Ovary (tissue), 10 donors: ENCODE measurements at regions of chr10 and their contacts with region 1.

Region 1: DNA sequence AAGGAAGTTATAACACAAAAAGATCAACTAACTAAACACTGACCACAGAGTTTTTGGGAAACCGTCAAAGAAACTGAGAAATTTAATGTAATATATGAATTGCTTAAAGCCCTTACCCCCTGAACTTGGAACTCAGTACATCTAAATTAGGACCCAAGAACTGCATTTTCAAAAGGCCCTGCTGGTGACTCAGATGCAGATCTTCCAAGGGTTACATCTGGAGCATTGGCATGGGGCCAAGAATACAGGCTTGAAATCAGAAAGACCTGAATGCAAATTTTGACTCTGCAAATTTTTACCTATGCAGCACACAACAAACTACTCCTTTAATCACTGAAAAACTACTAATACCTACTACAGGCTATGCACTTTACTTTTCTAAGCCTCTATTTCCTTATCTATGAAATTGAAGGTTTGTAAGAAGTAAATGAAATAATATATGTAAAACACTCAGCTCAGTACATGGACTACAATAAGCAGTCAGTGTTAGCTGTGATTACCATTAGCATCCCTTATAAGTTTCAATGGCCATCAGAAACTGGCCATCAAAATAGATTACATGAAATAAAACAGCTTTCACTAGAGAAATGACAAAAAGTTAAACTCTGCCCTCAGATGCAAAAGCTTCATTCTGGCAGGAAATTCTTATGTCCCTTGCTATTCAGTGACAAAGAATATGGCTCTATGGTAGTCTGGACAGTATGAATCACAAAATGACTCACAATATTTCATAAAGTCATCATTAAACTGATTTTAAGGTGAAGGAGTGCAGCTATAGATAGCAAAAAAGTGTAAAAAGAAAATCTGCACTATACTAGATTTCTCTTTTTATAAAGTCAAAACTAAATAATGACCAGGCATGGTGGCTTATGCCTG is 43.6 kb downstream of the NSUN6 start:
- DNase-seq: peak in 3 of 5 donors; percentile 20 to 37 (median 35)
- H3K4me3 ChIP-seq: no peak overlapping the region
- H3K27ac ChIP-seq: no peak overlapping the region
- H3K4me1 ChIP-seq: no peaks in the 10 kb centered on the region
- H3K27me3 ChIP-seq: no peaks in the 10 kb centered on the region
- CTCF ChIP-seq: no peak
- EP300 ChIP-seq: no peak
- POLR2A ChIP-seq: no peak

Region 2: GRCh38 chr10:17859492-17860156 is 748.1 kb before region 1 on chr10:
- intact Hi-C with region 1: loop called in 1 of 4 experiments (anchors 10 kb)
- DNase-seq: no peak
- H3K4me3 ChIP-seq: no peak overlapping the region
- H3K27ac ChIP-seq: no peak overlapping the region
- H3K4me1 ChIP-seq: no peaks in the 10 kb centered on the region
- H3K27me3 ChIP-seq: no peaks in the 10 kb centered on the region
- CTCF ChIP-seq: no peak
- EP300 ChIP-seq: no peak
- POLR2A ChIP-seq: no peak

Region 3: DNA sequence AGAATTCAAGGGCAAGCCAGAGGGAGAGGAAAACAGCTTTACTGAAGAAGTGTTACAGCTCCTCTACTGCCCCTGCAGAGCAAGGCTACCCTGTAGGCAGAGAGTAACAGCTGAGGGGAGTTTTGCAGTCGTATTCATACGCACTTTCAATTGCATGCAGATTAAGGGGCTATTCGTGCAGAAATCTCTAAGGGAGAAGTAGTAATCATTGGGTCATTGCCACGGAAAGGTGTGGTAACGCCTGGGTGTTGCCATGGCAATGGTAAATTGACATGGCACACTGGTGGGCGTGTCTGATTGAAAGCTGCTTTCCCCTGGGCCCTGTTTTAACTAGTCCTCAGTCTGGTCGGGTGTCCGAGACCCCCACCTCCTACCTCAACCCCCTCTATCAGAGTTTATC is 183.5 kb before region 1 on chr10:
- intact Hi-C with region 1: no loop called
- DNase-seq: no peak
- H3K4me3 ChIP-seq: no peak overlapping the region
- H3K27ac ChIP-seq: no peak overlapping the region
- H3K4me1 ChIP-seq: no peaks in the 10 kb centered on the region
- H3K27me3 ChIP-seq: no peaks in the 10 kb centered on the region
- CTCF ChIP-seq: no peak
- EP300 ChIP-seq: no peak
- POLR2A ChIP-seq: no peak

Region 4: DNA sequence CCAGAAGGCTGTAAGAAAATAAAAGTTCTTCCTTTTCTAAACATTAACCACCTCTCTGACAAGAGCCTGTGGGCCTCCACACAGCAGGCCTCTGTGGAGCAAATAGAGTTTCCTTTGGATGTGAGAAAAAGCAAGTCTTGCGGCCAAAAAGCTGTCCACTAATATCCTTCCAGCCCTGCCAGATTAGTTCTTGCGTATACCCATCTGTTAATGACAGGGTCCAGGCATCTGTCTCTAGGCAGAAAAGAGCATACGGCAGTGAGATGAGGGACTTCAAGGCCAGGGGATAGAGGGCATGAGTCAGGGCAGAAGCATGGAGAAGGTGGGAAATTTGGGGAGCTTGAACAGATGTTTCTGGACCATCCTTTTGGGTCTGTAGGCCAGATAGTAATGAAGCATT is 121.3 kb before region 1 on chr10:
- intact Hi-C with region 1: no loop called
- DNase-seq: no peak
- H3K4me3 ChIP-seq: no peak overlapping the region
- H3K27ac ChIP-seq: no peak overlapping the region
- H3K4me1 ChIP-seq: peaks cover 2% of the 10 kb centered on the region
- H3K27me3 ChIP-seq: no peaks in the 10 kb centered on the region
- CTCF ChIP-seq: no peak
- EP300 ChIP-seq: no peak
- POLR2A ChIP-seq: no peak